Heart left ventricle (tissue), 16 donors: ENCODE measurements at regions of chr1 and their contacts with region 1.

Region 1: GRCh38 chr1:27662707-27663393 is 9.1 kb downstream of the IFI6 start:
- DNase-seq: peak; percentile 73 to 85 (median 82)
- ATAC-seq: peak; percentile 52 to 78 (median 68)
- H3K4me3 ChIP-seq: peak overlapping the region in 1 of 12 donors; percentile 27
- H3K27ac ChIP-seq: peak overlapping the region; percentile 27 to 90 (median 72)
- H3K4me1 ChIP-seq: peaks cover 4 to 63% (median 34%) of the 10 kb centered on the region in 12 donors
- H3K27me3 ChIP-seq: no peaks in the 10 kb centered on the region
- CTCF ChIP-seq: peak; percentile 84 to 95 (median 90)
- POLR2A ChIP-seq: no peak

Region 2: DNA sequence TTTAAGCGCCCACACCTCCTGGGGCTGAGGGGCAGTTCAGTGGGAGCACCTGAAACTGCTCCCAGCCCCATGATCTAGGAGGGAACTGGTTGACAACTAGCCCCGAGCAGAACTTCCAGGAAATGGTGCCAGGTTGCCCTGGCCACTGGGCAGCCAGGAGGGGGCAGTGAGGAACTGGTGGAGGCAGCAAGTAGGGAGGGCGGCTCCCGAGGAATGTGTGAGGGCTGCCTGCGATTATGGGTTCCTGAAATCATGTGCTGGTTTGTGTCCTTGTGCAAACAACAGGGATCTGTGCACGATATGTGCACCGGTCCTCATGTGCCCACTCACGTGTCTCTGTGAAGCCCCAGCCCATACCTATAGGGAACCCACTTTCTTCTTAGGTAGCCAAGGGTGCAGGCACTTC is 260.5 kb before region 1 on chr1:
- intact Hi-C with region 1: loop called in 4 of 10 experiments (anchors 5 to 10 kb)
- DNase-seq: peak; percentile 68 to 87 (median 83)
- ATAC-seq: peak; percentile 38 to 57 (median 42)
- H3K4me3 ChIP-seq: no peak overlapping the region
- H3K27ac ChIP-seq: peak overlapping the region; percentile 76 to 87 (median 85)
- H3K4me1 ChIP-seq: peaks cover 27 to 96% (median 80%) of the 10 kb centered on the region in 12 donors
- H3K27me3 ChIP-seq: no peaks in the 10 kb centered on the region
- CTCF ChIP-seq: peak; percentile 42 to 70 (median 60)
- POLR2A ChIP-seq: no peak

Region 3: GRCh38 chr1:27519331-27520258 is 143.3 kb before region 1 on chr1:
- intact Hi-C with region 1: loop called in 1 of 10 experiments (anchors 10 kb)
- DNase-seq: peak in 4 of 5 donors; percentile 58 to 81 (median 70)
- ATAC-seq: peak; percentile 23 to 61 (median 56)
- H3K4me3 ChIP-seq: peak overlapping the region in 2 of 12 donors; percentile 21 to 22
- H3K27ac ChIP-seq: peak overlapping the region in 11 of 12 donors; percentile 61 to 96 (median 73)
- H3K4me1 ChIP-seq: peaks cover 8 to 89% (median 62%) of the 10 kb centered on the region in 12 donors
- H3K27me3 ChIP-seq: no peaks in the 10 kb centered on the region
- CTCF ChIP-seq: no peak
- POLR2A ChIP-seq: no peak

Region 4: GRCh38 chr1:27609210-27609555 is 53.7 kb before region 1 on chr1:
- intact Hi-C with region 1: loop called (anchors 1 to 2 kb)
- DNase-seq: no peak
- ATAC-seq: no peak
- H3K4me3 ChIP-seq: no peak overlapping the region
- H3K27ac ChIP-seq: no peak overlapping the region
- H3K4me1 ChIP-seq: peaks cover 0 to 46% (median 12%) of the 10 kb centered on the region in 12 donors
- H3K27me3 ChIP-seq: no peaks in the 10 kb centered on the region
- CTCF ChIP-seq: no peak
- POLR2A ChIP-seq: no peak

Region 5: GRCh38 chr1:27689423-27690173 is 26.7 kb after region 1 on chr1:
- intact Hi-C with region 1: no loop called
- DNase-seq: no peak
- ATAC-seq: peak in 2 of 4 donors; percentile 50 to 51
- H3K4me3 ChIP-seq: peak overlapping the region in 3 of 12 donors; percentile 5 to 36 (median 17)
- H3K27ac ChIP-seq: peak overlapping the region in 8 of 12 donors; percentile 3 to 72 (median 32)
- H3K4me1 ChIP-seq: peaks cover 0 to 17% (median 0%) of the 10 kb centered on the region in 12 donors
- H3K27me3 ChIP-seq: no peaks in the 10 kb centered on the region
- CTCF ChIP-seq: no peak
- POLR2A ChIP-seq: no peak